Posterior cingulate gyrus (tissue), 11 donors: ENCODE measurements at regions of chr7 and their contacts with region 1.

Region 1: DNA sequence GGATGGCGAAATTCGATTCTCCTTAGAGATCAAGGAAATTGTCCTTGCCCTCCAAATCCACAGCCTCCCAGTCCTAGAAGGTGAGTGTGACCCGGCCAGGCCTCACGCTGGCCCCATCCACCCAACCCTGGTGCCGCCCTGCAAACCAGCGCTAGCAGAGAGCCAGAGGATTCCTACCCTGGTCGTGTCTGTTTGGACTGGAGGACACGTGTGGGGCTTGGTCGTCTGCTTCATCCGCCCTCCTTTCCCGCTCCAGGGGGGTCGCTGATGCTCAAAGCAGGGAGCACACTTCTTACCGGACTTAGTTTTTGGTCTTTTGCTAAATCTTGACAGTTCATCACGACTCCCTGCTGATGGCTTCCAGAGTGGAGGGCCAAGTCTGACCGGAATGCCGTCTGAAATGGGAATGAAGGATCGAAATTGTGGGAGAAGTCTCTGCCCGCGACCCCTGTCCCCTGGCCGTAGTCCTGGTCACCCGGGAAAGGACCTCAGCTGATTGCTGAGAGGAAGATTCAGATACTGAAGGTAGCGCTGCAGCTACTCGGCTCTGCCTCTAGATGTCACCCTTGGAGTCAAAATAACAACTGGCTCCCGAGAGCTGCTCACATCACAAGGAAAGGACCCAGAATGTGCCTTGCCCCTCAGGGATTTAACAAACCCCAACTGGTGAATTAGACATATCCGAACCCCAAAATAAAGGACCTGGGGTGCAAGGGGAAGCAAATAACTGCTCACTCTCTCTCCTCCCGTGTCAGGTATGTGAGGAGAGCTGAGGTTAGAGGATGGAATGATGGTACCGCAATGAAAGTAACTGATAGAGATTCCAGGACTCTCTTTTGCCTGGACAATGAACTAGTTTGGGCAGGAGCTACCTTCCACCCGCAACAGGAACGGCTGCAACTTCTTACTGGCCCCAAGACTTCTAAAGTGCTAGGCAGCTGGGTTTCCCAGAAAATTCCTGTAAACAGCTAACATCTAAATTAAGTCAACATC is 23.5 kb upstream of the ORC5 start:
- DNase-seq: peak in 8 of 10 donors; percentile 35 to 90 (median 44)

Region 2: GRCh38 chr7:104137971-104138370 is 93.4 kb before region 1 on chr7:
- intact Hi-C with region 1: no loop called
- DNase-seq: no peak

Region 3: GRCh38 chr7:104267701-104268368 is 36.5 kb after region 1 on chr7:
- intact Hi-C with region 1: loop called (anchors 5 kb)
- DNase-seq: no peak